ENCODE measurements at regions of chr6 and their contacts with region 1.

Region 1: GRCh38 chr6:157667211-157668008 is 155.6 kb upstream of the SNX9 start:
- DNase-seq: peak; percentile 36
- H3K4me3 Mint-ChIP-seq: no peak overlapping the region
- H3K27ac Mint-ChIP-seq: no peak overlapping the region
- H3K4me1 Mint-ChIP-seq: peaks cover 5% of the 10 kb centered on the region
- H3K27me3 Mint-ChIP-seq: peaks cover 12% of the 10 kb centered on the region

Region 2: DNA sequence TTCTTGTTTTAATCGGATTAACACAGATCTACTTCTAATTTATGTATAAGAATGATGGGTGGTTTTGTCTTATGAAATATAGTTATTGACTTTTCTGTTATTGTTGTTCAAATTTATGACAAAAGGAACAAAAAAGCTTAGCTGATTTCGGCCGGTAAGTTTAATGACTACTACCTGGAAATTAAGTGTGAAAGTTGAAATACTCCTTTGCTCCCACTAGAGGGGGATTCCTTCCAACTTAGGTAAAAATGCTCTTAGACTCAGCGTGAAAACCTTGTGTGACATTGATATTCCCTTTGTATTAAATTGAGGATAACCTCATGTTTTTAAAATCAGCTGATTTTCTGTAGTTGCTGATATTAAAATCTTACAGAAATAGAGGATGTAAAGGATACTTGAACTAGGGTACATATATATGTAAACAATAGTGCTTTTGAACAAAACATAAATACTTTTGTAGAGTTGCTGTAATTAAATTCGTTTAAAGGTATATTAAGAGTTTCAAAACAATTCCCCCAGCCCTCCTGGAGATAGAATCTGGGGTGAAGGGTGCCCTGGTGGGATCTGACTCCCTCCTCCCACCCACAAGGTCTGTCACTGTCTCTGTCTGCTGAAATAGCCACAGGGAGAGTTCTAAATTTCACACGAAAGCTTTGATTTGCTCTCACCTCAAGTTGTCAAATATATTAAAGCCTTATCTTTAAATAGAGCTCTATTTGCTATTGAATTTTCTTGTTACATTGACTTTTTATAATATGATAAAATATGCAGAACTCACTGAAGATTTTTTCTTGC is 632.8 kb before region 1 on chr6:
- intact Hi-C with region 1: no loop called
- DNase-seq: no peak
- H3K4me3 Mint-ChIP-seq: peak overlapping the region; percentile 49
- H3K27ac Mint-ChIP-seq: no peak overlapping the region
- H3K4me1 Mint-ChIP-seq: peaks cover 21% of the 10 kb centered on the region
- H3K27me3 Mint-ChIP-seq: no peaks in the 10 kb centered on the region

Region 3: DNA sequence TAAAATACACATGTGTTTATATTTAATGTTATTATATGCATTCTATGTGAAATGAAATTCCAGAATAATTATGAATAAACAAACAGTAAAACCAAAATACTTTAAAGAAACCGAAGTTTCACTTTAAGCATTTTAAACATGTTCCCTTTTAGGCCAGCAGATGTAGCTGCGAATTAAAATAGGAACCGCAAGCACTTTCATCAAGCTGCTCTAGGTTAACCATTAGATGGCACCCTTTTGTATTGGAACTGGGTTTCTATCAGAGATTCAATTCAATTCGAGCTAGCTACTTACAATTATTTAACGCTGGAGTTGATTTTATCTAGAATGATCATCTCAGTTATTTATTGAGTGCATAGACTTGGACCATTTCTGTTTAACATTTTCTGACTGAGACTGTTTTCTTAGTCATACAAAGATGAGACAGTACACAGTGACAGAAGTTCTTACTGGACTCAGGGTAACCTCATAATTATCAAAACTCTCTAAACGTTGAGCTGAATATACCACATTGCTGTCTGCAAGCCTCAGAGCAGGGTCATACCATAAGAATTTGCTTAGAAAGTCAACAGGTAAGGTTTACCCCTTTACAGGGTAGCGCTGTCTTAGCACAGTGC is 352.6 kb before region 1 on chr6:
- intact Hi-C with region 1: loop called (anchors 1 kb)
- DNase-seq: no peak
- H3K4me3 Mint-ChIP-seq: no peak overlapping the region
- H3K27ac Mint-ChIP-seq: no peak overlapping the region
- H3K4me1 Mint-ChIP-seq: peaks cover 9% of the 10 kb centered on the region
- H3K27me3 Mint-ChIP-seq: no peaks in the 10 kb centered on the region

Region 4: DNA sequence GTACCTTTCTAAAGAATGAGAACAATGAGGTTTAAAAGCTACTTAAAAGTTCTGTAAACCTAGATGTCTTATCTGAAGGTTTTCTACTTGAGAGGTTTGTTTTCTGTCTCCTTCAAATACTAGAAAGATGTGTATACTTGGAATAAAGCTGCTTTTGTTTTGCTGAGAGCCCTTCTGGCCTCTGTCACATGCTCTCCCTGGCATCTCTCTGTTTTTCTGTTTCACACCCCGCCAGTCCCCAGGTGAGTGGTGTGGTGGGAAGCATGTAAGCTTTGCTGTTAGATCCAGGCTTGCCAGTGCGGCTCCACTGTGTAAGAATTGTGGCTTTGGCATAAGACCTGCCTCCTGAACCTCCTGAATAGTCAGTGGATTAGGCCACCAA is 212.5 kb after region 1 on chr6:
- intact Hi-C with region 1: loop called (anchors 10 kb)
- DNase-seq: no peak
- H3K4me3 Mint-ChIP-seq: no peak overlapping the region
- H3K27ac Mint-ChIP-seq: no peak overlapping the region
- H3K4me1 Mint-ChIP-seq: peaks cover 59% of the 10 kb centered on the region
- H3K27me3 Mint-ChIP-seq: peaks cover 5% of the 10 kb centered on the region